Gastrocnemius medialis (tissue), 4 donors: ENCODE measurements at regions of chr14 and their contacts with region 1.

Region 1: GRCh38 chr14:73728717-73729330 is 14.6 kb upstream of the PNMA1 start:
- DNase-seq: peak; percentile 75 to 83
- ATAC-seq: peak; percentile 26
- H3K4me3 ChIP-seq: no peak overlapping the region
- H3K27ac ChIP-seq: peak overlapping the region; percentile 65 to 95 (median 90)
- H3K4me1 ChIP-seq: peaks cover 43 to 58% of the 10 kb centered on the region in 2 donors
- H3K27me3 ChIP-seq: no peaks in the 10 kb centered on the region
- CTCF ChIP-seq: peak; percentile 93 to 98 (median 96)
- POLR2A ChIP-seq: no peak

Region 2: DNA sequence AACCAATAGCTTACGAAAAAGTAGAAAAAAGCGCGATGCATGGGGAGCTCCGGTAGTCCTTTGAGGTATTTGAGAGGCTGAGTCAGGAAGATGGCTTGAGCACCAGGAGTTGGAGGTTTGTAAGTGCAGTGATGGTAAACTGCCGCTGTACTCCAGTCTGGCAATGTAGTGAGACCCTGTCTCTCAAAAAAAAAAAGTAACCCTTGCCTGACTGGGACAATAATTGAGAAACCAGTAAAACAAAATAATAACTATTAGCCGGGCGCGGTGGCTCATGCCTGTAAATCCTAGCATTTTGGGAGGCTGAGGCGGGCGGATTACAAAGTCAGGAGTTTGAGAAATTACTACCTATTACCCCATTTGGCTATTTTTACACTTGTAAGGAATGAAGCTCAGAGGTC is 160.4 kb before region 1 on chr14:
- in situ Hi-C with region 1: no loop called
- intact Hi-C with region 1: loop called (anchors 5 kb)
- DNase-seq: no peak
- ATAC-seq: peak in 1 of 2 donors; percentile 22
- H3K4me3 ChIP-seq: peak overlapping the region; percentile 56 to 81 (median 72)
- H3K27ac ChIP-seq: peak overlapping the region; percentile 88 to 98 (median 94)
- H3K4me1 ChIP-seq: peaks cover 9 to 28% of the 10 kb centered on the region in 2 donors
- H3K27me3 ChIP-seq: no peaks in the 10 kb centered on the region
- CTCF ChIP-seq: no peak
- POLR2A ChIP-seq: no peak

Region 3: GRCh38 chr14:73662487-73662943 is 66.3 kb before region 1 on chr14:
- in situ Hi-C with region 1: no loop called
- intact Hi-C with region 1: no loop called
- DNase-seq: peak; percentile 45 to 58
- ATAC-seq: peak; percentile 96
- H3K4me3 ChIP-seq: no peak overlapping the region
- H3K27ac ChIP-seq: peak overlapping the region in 1 of 4 donors; percentile 44
- H3K4me1 ChIP-seq: no peaks in the 10 kb centered on the region
- H3K27me3 ChIP-seq: no peaks in the 10 kb centered on the region
- CTCF ChIP-seq: peak in 2 of 5 experiments; percentile 1 to 26
- POLR2A ChIP-seq: no peak

Region 4: GRCh38 chr14:73758403-73759182 is 29.8 kb after region 1 on chr14:
- in situ Hi-C with region 1: no loop called
- intact Hi-C with region 1: loop called (anchors 1 kb)
- DNase-seq: peak; percentile 68 to 81
- ATAC-seq: peak in 1 of 2 donors; percentile 11
- H3K4me3 ChIP-seq: peak overlapping the region; percentile 61 to 91 (median 76)
- H3K27ac ChIP-seq: peak overlapping the region; percentile 89 to 98 (median 94)
- H3K4me1 ChIP-seq: peaks cover 85 to 87% of the 10 kb centered on the region in 2 donors
- H3K27me3 ChIP-seq: no peaks in the 10 kb centered on the region
- CTCF ChIP-seq: peak; percentile 49 to 67 (median 65)
- POLR2A ChIP-seq: no peak

Region 5: DNA sequence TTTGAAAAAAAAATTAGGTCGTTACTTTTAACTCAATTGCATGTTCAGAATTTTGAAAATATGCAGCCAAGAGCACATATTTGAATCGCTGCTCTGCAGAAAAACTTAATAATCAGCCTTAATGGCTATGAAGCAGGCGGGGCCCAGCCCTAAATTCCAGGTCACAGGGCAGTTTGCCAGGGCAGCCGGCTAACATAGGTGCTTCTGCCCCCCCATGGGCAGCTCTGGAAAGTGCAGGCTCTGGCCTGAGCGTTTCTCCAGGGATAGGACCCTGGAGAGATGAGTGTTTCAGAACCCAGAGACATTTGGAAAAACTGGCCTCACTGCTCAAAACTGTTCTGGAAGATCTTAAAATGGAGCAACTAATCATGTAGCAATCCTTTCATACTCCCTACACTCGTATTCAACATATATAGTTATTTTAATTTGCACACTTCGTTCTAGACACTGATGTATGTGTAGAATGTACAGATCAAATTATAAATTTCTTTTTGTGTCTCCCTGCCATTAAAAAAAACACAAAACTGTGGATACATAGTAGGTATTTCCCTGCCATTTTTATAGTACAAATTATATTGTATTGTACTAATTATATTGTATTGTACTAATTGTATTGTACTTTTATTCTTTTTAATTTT is 96.8 kb after region 1 on chr14:
- in situ Hi-C with region 1: loop called (anchors 5 to 10 kb)
- intact Hi-C with region 1: loop called (anchors 1 kb)
- DNase-seq: peak; percentile 82 to 88
- ATAC-seq: peak; percentile 93 to 97
- H3K4me3 ChIP-seq: no peak overlapping the region
- H3K27ac ChIP-seq: no peak overlapping the region
- H3K4me1 ChIP-seq: peaks cover 3 to 7% of the 10 kb centered on the region in 2 donors
- H3K27me3 ChIP-seq: no peaks in the 10 kb centered on the region
- CTCF ChIP-seq: peak; percentile 91 to 96 (median 93)
- POLR2A ChIP-seq: no peak

Region 6: DNA sequence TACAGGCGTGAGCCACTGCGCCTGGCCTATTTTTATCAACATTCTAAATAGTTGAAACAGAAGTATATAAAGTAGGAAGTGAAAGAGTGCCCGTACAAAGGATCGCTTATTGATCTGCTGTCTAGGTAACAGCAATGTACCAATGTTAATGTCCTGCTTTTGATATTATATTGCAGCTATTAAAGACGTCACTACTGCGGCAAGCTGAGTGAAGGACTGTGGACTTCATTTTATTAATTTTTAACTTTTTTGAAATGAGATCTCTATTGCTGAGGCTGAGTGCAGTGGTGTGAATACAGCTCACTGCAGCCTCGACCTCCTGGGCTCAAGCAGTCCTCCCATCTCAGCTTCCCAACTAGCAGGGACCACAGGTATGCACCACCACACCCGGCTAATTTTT is 133.7 kb after region 1 on chr14:
- in situ Hi-C with region 1: no loop called
- intact Hi-C with region 1: no loop called
- DNase-seq: no peak
- ATAC-seq: no peak
- H3K4me3 ChIP-seq: no peak overlapping the region
- H3K27ac ChIP-seq: no peak overlapping the region
- H3K4me1 ChIP-seq: no peaks in the 10 kb centered on the region
- H3K27me3 ChIP-seq: no peaks in the 10 kb centered on the region
- CTCF ChIP-seq: no peak
- POLR2A ChIP-seq: no peak

Region 7: GRCh38 chr14:73949744-73950734 is 221.2 kb after region 1 on chr14 and contains the starts of genes COQ6 and FAM161B:
- in situ Hi-C with region 1: no loop called
- intact Hi-C with region 1: loop called (anchors 10 kb)
- DNase-seq: peak; percentile 94 to 95
- ATAC-seq: peak; percentile 98
- H3K4me3 ChIP-seq: peak within 1 kb of the TSS; percentile 68 to 97 (median 94)
- H3K27ac ChIP-seq: peak within 1 kb of the TSS; percentile 90 to 98 (median 93)
- H3K4me1 ChIP-seq: peaks cover 9 to 21% of the 10 kb centered on the region in 2 donors
- H3K27me3 ChIP-seq: no peaks in the 10 kb centered on the region
- CTCF ChIP-seq: peak in 3 of 5 experiments; percentile 8 to 20 (median 16)
- POLR2A ChIP-seq: peak; percentile 79
- total RNA-seq, gene COQ6: 36.5 to 60.6 (median 42.2) TPM
- total RNA-seq, gene FAM161B: 5.0 to 7.7 (median 6.0) TPM

Region 8: DNA sequence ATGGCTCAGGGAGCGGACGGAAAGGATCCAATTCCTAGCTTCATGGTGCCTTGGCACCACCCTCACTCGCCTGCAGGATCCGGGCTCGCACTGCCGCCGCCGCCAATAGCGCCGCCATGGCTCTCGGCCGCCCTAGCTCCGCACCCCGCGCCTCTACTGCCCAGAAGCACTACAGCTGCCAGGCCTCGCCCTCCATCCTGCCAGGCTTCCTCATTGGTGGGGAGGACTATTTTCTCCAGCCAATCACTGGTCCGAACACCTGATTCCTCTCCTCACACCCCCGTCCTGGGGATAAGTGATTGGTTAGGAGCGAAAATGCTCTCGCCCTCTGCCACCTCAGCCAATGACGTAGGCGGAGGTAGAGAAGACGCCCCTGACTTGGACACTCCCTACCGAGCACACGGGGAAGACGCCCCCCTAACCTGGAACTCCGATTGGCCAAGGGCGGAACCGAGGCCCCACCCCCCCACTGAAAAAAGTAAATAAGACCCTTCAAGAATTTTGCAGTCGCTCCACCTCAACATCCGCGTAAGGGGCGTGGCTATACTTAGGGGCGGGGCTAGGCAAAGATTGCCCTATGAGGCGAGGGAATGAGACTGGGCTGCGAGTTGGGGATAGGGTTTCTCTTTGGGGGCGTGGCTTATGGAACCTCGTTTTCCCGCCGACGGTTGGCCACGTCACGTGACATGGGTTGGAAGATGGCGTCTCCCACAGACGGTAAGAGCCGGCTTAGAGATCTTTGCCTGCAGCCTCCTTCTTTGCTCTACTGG is 355.6 kb after region 1 on chr14 and contains the starts of genes ALDH6A1 and LIN52:
- in situ Hi-C with region 1: no loop called
- intact Hi-C with region 1: loop called (anchors 10 kb)
- DNase-seq: peak; percentile 100
- ATAC-seq: peak; percentile 95 to 96
- H3K4me3 ChIP-seq: peak within 1 kb of the TSS; percentile 59 to 98 (median 84)
- H3K27ac ChIP-seq: peak within 1 kb of the TSS; percentile 88 to 96 (median 93)
- H3K4me1 ChIP-seq: peaks cover 26 to 39% of the 10 kb centered on the region in 2 donors
- H3K27me3 ChIP-seq: no peaks in the 10 kb centered on the region
- CTCF ChIP-seq: peak in 3 of 5 experiments; percentile 24 to 42 (median 27)
- POLR2A ChIP-seq: peak; percentile 95 to 96
- total RNA-seq, gene ALDH6A1: 5.9 to 26.3 (median 20.3) TPM
- total RNA-seq, gene LIN52: 3.4 to 5.6 (median 4.3) TPM